Left colon (tissue), 2 donors: ENCODE measurements at regions of chr13 and their contacts with region 1.

Region 1: DNA sequence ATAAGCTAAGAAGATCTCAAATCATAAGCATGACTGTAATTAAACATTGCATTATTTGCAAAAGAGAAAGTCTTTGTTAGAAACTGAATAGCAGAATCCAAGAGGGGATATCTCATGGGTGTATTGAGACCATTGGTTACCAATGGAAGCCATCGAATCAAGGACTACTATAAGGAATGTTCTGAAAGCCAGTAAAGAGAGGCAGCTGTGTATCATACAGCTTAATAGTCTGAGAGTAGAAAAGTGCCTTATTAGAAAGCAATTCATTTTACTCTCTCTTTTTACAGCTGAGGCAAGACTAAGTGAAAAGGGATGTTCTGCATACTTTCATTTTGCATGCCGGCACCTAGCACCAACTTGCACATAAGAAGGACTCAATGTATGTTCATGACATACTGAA is 7.6 kb upstream of the DCT start:
- DNase-seq: no peak
- ATAC-seq: no peak

Region 2: DNA sequence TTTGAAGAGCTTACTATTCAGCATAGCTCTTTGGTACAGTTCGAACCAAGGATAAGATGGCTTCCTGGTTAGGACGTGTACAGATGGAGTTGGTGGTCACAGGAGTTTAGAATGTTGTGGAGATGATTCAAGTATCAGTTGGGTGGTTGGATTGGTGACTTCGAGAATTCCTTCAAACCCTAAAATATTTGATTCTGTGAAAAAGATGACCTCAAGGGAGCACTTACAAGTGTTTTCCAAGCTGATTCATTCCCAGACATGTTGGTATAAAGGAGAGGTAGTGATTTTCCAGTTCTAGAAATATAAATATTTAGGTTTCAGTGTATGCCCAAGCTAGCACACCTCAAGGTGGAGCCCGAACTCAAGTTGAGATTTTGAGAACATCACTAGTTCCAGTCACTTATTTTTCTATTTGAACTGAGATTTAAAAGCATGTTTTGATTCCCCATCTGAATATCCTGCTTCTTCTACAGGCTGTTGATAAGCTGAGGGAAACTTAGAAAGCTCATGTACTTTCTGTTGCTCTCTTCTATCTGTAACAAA is 313.7 kb before region 1 on chr13:
- intact Hi-C with region 1: no loop called
- DNase-seq: no peak
- ATAC-seq: no peak

Region 3: DNA sequence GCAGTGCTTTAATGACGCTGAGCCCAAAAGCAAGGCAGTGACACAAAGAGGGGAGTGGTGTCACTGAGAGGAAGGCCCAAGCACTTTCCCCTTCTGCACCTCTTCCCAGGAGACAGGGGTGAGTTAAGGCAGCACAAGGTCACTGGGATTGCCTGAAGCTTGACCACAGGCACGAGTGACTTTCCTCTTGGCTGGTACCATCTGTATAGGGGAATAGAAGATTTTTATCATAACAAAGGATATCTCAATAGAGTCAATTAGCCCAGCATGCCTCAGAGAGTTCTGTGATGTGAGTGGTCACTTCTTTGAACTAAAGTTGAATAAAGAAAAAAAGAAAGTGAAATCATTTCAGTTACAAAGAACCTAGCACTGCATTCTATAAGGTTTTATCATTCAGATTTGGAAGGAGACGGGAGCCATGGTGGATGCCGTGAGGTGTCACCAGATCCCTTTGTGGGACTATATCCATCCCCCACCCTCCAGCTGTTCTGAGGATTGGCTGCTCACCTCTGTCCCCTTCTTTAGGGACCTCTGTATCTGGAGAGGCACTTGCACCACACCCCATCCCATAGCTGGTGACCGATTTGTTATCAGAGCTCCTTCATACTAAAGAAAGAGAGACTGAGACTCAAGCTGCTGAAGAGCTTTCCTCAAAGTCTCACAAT is 298.7 kb before region 1 on chr13:
- intact Hi-C with region 1: loop called in 1 of 2 experiments (anchors 5 kb)
- DNase-seq: no peak
- ATAC-seq: no peak

Region 4: GRCh38 chr13:94515374-94515773 is 28.3 kb after region 1 on chr13:
- intact Hi-C with region 1: no loop called
- DNase-seq: no peak
- ATAC-seq: no peak